ENCODE measurements at regions of chr14 and their contacts with region 1.

Region 1: GRCh38 chr14:59439256-59439965 is 25.8 kb downstream of the GPR135 start:
- DNase-seq: peak in 1 of 4 donors; percentile 57
- ATAC-seq: no peak
- H3K4me3 ChIP-seq: no peak overlapping the region
- H3K27ac ChIP-seq: no peak overlapping the region
- H3K4me1 ChIP-seq: peaks cover 0 to 12% of the 10 kb centered on the region in 2 donors
- H3K27me3 ChIP-seq: no peaks in the 10 kb centered on the region
- CTCF ChIP-seq: no peak

Region 2: GRCh38 chr14:59126710-59127432 is 312.5 kb before region 1 on chr14:
- intact Hi-C with region 1: loop called in 1 of 2 experiments (anchors 2 kb)
- DNase-seq: peak in 2 of 4 donors; percentile 39 to 65
- ATAC-seq: peak; percentile 95
- H3K4me3 ChIP-seq: no peak overlapping the region
- H3K27ac ChIP-seq: no peak overlapping the region
- H3K4me1 ChIP-seq: no peaks in the 10 kb centered on the region
- H3K27me3 ChIP-seq: no peaks in the 10 kb centered on the region
- CTCF ChIP-seq: peak; percentile 60 to 81

Region 3: DNA sequence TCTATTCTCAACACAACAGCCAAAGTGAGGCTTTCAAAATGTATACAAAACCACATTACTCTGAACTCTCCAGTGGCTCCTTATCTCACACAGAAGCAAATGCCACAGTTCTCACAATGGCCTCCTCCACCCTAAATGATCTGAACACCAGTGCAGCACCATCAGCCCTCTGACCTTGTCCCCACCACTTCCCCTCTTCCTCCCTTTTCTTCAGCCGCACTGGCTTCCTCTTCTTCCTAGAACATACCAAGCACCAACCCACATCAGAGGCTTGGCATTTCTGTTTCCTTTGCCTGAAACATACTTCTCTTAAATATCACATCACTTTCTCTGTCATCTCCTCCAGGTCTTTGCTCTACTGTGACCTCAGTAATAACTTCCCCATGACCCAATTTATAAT is 40.6 kb before region 1 on chr14:
- intact Hi-C with region 1: no loop called
- DNase-seq: no peak
- ATAC-seq: peak; percentile 29
- H3K4me3 ChIP-seq: no peak overlapping the region
- H3K27ac ChIP-seq: no peak overlapping the region
- H3K4me1 ChIP-seq: no peaks in the 10 kb centered on the region
- H3K27me3 ChIP-seq: no peaks in the 10 kb centered on the region
- CTCF ChIP-seq: no peak

Measured in left lung (tissue), 14 donors.